K562 (cell line): ENCODE measurements at regions of chr16 and their contacts with region 1.

Region 1: DNA sequence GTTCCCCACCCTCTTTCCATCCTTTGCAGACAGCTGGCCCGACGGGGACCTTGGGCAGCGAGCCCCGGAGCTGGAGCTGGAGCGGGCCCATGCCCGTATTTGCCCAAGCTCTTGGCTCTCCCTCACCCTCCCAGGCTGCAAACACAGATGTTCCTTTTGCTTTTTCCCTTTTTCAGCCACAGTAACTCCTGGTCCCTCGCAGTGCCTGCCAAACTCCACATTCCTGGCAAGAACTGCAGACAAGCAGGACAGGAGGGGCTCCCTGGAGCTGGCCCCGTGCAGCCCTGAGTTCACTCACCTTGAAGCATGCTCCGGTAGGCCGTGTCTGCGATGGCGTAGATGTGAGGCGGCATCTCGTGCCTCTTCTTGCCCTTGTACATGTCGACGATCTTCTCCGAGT is 33.9 kb downstream of the MYH11 start:
- DNase-seq: no peak
- ATAC-seq: no peak; the same call in 2 of the 3 replicates
- H3K4me3 ChIP-seq: no peak overlapping the region
- H3K27ac ChIP-seq: no peak overlapping the region
- H3K4me1 ChIP-seq: 0 out of 5 replicates have a peak, but pooled peaks cover 0 to 3% of the 10 kb centered on the region in 2 experiments
- H3K27me3 ChIP-seq: peaks cover 16 to 33% of the 10 kb centered on the region in 2 experiments
- CTCF ChIP-seq: no peak
- EP300 ChIP-seq: no peak
- POLR2A ChIP-seq: no peak
- RAD21 ChIP-seq: no peak

Region 2: DNA sequence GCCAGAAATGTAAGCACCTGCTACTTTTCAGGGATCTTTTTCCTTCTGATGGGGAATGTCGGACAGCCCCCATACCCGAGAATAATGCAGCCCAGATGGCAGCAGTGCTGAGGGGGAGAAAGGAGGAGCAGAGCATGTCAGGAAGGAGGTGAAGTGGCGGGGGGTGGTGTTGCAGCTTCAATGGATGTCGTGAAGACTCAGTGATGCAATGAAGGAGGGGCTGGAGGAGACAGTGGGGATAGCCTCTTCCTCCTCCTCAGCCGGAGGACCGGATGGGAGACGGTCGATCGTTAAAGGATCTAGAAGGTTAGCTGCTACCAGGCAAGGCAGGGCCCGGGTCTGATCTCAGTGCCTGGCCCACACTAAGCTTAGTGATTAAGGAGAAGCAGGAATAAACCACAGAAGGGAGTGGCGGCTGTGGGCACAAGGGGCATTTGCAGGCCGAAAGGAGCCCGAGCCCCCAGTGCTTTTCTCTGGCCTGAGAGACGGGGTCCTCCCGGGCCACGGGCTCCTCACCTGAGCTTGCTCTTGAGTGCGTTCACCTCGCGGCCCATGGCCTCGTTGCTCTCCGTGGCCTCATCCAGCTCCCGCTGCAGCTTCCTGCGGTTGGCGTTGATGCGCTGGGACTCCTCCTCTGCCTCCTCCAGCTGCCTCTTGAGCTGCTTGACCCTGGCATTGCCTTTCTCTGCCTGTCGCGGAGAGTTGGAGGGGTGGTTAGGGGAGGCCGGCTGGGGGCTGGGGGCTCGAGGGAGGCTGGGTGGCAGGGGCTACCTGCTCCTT is 108.4 kb before region 1 on chr16:
- CTCF ChIA-PET with region 1: no interaction called
- POLR2A ChIA-PET with region 1: no interaction called
- in situ Hi-C with region 1: no loop called
- intact Hi-C with region 1: no loop called
- DNase-seq: no peak
- ATAC-seq: no peak
- H3K4me3 ChIP-seq: no peak overlapping the region
- H3K27ac ChIP-seq: no peak overlapping the region
- H3K4me1 ChIP-seq: no peaks in the 10 kb centered on the region
- H3K27me3 ChIP-seq: no peaks in the 10 kb centered on the region
- CTCF ChIP-seq: no peak
- EP300 ChIP-seq: no peak
- POLR2A ChIP-seq: no peak
- RAD21 ChIP-seq: no peak

Region 3: DNA sequence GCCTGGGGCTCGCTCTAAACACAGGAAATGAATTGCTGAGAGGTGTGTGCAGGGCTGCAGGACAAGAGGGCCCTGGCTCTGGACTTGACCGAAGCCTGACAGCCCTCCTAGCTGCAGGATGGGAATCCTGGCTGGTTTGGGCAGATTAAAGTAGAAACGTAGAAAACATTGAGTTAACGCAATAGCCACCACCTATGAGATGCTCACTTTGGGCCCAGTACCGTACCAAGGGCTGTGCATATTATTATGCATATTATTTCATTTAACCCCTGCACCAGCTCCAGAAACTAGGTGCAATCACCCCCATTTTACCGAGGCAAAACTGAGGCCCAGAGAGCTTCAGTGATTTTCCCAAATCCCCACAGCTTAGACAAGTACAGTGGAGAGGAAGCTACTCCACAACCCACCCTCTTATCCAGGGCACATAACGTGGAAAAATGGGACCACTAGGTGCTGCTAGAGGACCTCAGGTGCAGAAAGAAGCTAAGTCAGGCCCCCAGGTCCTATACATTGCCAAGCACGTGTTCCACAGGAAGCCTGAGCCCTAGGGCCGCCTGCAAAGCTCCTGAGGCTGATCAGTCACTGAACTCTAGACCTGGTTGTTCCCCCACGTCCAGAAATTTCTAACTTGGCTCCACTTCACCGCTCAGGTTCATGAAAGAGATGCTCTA is 45.3 kb before region 1 on chr16:
- CTCF ChIA-PET with region 1: no interaction called
- POLR2A ChIA-PET with region 1: interaction called, 4 read pairs
- in situ Hi-C with region 1: no loop called
- intact Hi-C with region 1: loop called (anchors 5 kb)
- DNase-seq: peak; percentile 65 to 76 (median 66)
- ATAC-seq: peak; percentile 97
- H3K4me3 ChIP-seq: no peak overlapping the region
- H3K27ac ChIP-seq: no peak overlapping the region
- H3K4me1 ChIP-seq: peaks cover 0 to 3% of the 10 kb centered on the region in 2 experiments; a peak in 2 of 5 replicates
- H3K27me3 ChIP-seq: peaks cover 15 to 49% of the 10 kb centered on the region in 2 experiments
- CTCF ChIP-seq: peak; percentile 79 to 85 (median 81)
- EP300 ChIP-seq: no peak
- POLR2A ChIP-seq: no peak
- RAD21 ChIP-seq: peak; percentile 59 to 89